Activated T-helper 1 cell treated with anti-CD3 and anti-CD28 coated beads, Interleukin-12 subunit alpha, Interleukin-12 subunit beta, Interleukin-2, Interleukin-4 antibody, amounts not matched to agents 30 ng/mL and 10 ng/mL and 1 ng/mL, durations not matched to agents 14 hours and 24 hours and 36 hours (primary cell): ENCODE measurements at regions of chrX and their contacts with region 1.

Region 1: GRCh38 chrX:147476008-147476407 is 435.7 kb upstream of the FMR1 start:
- DNase-seq: no peak
- H3K4me3 Mint-ChIP-seq: no peak overlapping the region
- H3K27ac Mint-ChIP-seq: no peak overlapping the region
- H3K4me1 Mint-ChIP-seq: no peaks in the 10 kb centered on the region
- H3K27me3 Mint-ChIP-seq: no peaks in the 10 kb centered on the region

Region 2: GRCh38 chrX:147559191-147559590 is 83.2 kb after region 1 on chrX:
- intact Hi-C with region 1: no loop called
- DNase-seq: no peak
- H3K4me3 Mint-ChIP-seq: no peak overlapping the region
- H3K27ac Mint-ChIP-seq: no peak overlapping the region
- H3K4me1 Mint-ChIP-seq: no peaks in the 10 kb centered on the region
- H3K27me3 Mint-ChIP-seq: no peaks in the 10 kb centered on the region

Region 3: GRCh38 chrX:147803948-147804347 is 327.9 kb after region 1 on chrX:
- intact Hi-C with region 1: loop called (anchors 1 kb)
- DNase-seq: no peak
- H3K4me3 Mint-ChIP-seq: no peak overlapping the region
- H3K27ac Mint-ChIP-seq: no peak overlapping the region
- H3K4me1 Mint-ChIP-seq: no peaks in the 10 kb centered on the region
- H3K27me3 Mint-ChIP-seq: no peaks in the 10 kb centered on the region